Activated CD4-positive, alpha-beta T cell treated with anti-CD3 and anti-CD28 coated beads for 36 hours (primary cell): ENCODE measurements at regions of chr7 and their contacts with region 1.

Region 1: DNA sequence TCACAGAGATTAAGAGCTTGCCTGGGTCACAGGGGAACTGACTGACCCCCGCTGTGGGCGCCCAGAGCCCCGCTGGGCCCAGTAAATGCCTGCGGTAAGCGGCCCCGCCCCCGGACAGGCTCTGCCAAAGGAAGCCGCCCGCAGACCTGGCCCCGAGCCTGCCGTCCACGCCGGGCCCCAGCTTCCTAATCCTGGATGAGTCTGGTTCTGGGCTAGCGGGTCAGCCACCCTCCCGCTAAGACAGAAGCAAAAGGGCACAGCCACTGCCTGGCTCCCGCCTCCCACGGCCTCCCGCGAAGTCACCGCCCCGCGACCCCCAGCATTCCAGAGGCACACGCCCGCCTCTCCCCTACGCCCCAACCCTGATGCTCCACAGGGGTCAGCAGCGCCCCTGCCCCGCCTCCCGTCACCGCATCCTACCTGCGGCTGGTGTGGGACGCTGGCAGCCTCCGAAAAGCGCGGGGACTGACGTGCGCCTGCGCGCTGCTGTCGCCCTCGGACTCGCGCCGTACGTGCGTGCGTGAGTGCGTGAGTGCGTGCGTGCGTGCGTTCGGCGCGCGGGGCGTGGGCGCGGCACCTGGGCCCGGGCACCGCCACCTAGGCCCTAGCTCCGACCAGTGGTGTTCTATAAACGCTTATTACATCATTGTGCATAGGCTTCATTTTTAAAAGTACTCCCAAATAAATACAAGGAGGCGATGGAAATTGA is at the start of gene FIGNL1:
- DNase-seq: peak; percentile 92
- ATAC-seq: peak; percentile 87
- H3K4me3 Mint-ChIP-seq: peak within 1 kb of the TSS; percentile 70
- H3K27ac Mint-ChIP-seq: peak within 1 kb of the TSS; percentile 93
- H3K4me1 Mint-ChIP-seq: peaks cover 46% of the 10 kb centered on the region
- H3K27me3 Mint-ChIP-seq: no peaks in the 10 kb centered on the region
- total RNA-seq, gene FIGNL1: 46.9 to 49.3 TPM

Region 2: GRCh38 chr7:50142425-50143017 is 307.5 kb before region 1 on chr7:
- CTCF ChIA-PET with region 1: interaction called, 5 read pairs
- POLR2A ChIA-PET with region 1: no interaction called
- intact Hi-C with region 1: loop called (anchors 1 to 10 kb)
- DNase-seq: peak; percentile 51
- ATAC-seq: peak; percentile 63
- H3K4me3 Mint-ChIP-seq: peak overlapping the region; percentile 53
- H3K27ac Mint-ChIP-seq: peak overlapping the region; percentile 94
- H3K4me1 Mint-ChIP-seq: peaks cover 43% of the 10 kb centered on the region
- H3K27me3 Mint-ChIP-seq: no peaks in the 10 kb centered on the region

Region 3: GRCh38 chr7:50206453-50207250 is 243.4 kb before region 1 on chr7:
- CTCF ChIA-PET with region 1: no interaction called
- POLR2A ChIA-PET with region 1: no interaction called
- intact Hi-C with region 1: loop called in 1 of 2 experiments (anchors 2 kb)
- DNase-seq: peak; percentile 86
- ATAC-seq: peak; percentile 67
- H3K4me3 Mint-ChIP-seq: peak overlapping the region; percentile 52
- H3K27ac Mint-ChIP-seq: peak overlapping the region; percentile 89
- H3K4me1 Mint-ChIP-seq: peaks cover 97% of the 10 kb centered on the region
- H3K27me3 Mint-ChIP-seq: no peaks in the 10 kb centered on the region

Region 4: DNA sequence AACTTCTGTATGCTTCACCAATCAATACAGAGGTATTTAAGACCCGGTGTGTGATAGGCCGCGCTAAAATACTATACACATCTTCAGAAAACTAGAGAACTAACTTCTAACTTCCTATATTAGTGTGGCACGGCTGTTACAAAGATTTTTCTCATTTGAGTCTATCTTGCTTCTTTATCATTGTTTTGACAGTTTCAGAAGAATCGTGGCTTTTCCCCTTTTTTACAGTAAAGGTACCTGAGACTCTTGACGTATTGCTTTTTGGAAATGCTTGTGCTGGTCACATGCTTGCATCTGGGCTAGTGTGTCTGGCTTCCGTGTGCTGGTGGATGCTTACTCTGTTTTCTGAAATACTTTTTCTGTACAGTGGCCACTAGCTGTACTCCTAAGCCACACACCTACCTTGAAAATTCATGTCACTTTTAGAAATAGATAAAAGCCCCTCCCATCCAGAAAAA is 132.8 kb before region 1 on chr7:
- CTCF ChIA-PET with region 1: interaction called, 6 read pairs
- POLR2A ChIA-PET with region 1: no interaction called
- intact Hi-C with region 1: loop called in 1 of 2 experiments (anchors 5 kb)
- DNase-seq: peak; percentile 73
- ATAC-seq: peak; percentile 82
- H3K4me3 Mint-ChIP-seq: peak overlapping the region; percentile 95
- H3K27ac Mint-ChIP-seq: peak overlapping the region; percentile 100
- H3K4me1 Mint-ChIP-seq: peaks cover 93% of the 10 kb centered on the region
- H3K27me3 Mint-ChIP-seq: no peaks in the 10 kb centered on the region

Region 5: DNA sequence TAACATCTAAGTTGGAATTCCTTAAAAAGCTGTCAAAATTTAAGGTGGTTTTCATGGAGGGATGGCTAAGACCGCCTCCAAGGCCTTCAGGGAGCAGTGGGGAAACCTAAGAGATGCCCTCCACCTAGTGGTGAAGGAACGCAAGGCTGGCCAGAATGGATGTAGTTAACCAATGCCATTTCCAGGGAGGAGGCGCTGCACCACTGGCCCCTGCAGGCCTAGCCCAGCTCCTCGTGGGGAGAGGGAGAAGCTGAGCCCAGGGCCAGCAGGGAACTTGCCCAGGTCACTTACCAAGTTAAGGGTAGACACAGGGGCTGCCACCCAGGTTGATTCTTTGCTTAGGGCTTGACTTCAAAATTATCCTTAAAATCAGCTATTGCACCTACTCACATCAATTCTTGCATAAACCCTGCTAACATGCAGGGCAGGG is 31.9 kb before region 1 on chr7:
- CTCF ChIA-PET with region 1: interaction called, 12 read pairs
- POLR2A ChIA-PET with region 1: no interaction called
- intact Hi-C with region 1: loop called in 1 of 2 experiments (anchors 1 kb)
- DNase-seq: peak; percentile 89
- ATAC-seq: peak; percentile 96
- H3K4me3 Mint-ChIP-seq: no peak overlapping the region
- H3K27ac Mint-ChIP-seq: no peak overlapping the region
- H3K4me1 Mint-ChIP-seq: peaks cover 24% of the 10 kb centered on the region
- H3K27me3 Mint-ChIP-seq: no peaks in the 10 kb centered on the region

Region 6: DNA sequence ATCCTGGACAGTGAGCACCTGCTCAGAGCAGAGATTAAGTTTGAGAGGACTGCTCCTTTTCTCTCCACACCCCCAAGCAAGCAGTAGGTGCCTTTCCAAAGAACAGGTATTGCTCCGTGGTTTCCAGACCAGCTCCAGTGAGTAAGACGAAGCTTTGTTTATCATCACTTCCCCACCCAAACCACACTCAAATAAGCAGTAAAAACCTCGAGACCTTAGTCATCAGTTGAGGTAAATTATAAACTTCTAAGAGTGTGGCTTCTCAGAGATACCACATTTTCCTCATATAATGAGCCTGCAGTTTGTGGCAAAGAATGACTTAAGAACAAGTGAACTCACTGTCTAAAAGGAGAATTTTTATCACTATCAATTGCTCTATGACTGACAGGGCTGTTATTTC is 382.7 kb after region 1 on chr7:
- CTCF ChIA-PET with region 1: no interaction called
- POLR2A ChIA-PET with region 1: no interaction called
- intact Hi-C with region 1: loop called in 1 of 2 experiments (anchors 1 kb)
- DNase-seq: peak; percentile 54
- ATAC-seq: peak; percentile 94
- H3K4me3 Mint-ChIP-seq: no peak overlapping the region
- H3K27ac Mint-ChIP-seq: peak overlapping the region; percentile 7
- H3K4me1 Mint-ChIP-seq: peaks cover 18% of the 10 kb centered on the region
- H3K27me3 Mint-ChIP-seq: peaks cover 34% of the 10 kb centered on the region